K562 (cell line): ENCODE measurements at regions of chr11 and their contacts with region 1.

Region 1: GRCh38 chr11:8192016-8192895 is 23.4 kb upstream of the RIC3 start:
- DNase-seq: peak; percentile 68 to 77 (median 72)
- ATAC-seq: peak; percentile 98
- H3K4me3 ChIP-seq: no peak overlapping the region
- H3K27ac ChIP-seq: no peak overlapping the region
- H3K4me1 ChIP-seq: peaks cover 0 to 3% of the 10 kb centered on the region in 2 experiments; a peak in 1 of 5 replicates
- H3K27me3 ChIP-seq: peaks cover 0 to 6% of the 10 kb centered on the region in 2 experiments; a peak in 2 of 5 replicates
- CTCF ChIP-seq: peak; percentile 80 to 90 (median 86)
- EP300 ChIP-seq: no peak
- POLR2A ChIP-seq: no peak
- RAD21 ChIP-seq: peak; percentile 75 to 87

Region 2: GRCh38 chr11:8056810-8057463 is 135.3 kb before region 1 on chr11:
- CTCF ChIA-PET with region 1: no interaction called
- POLR2A ChIA-PET with region 1: no interaction called
- in situ Hi-C with region 1: no loop called
- intact Hi-C with region 1: no loop called
- DNase-seq: no peak
- ATAC-seq: no peak
- H3K4me3 ChIP-seq: no peak overlapping the region
- H3K27ac ChIP-seq: no peak overlapping the region
- H3K4me1 ChIP-seq: no peaks in the 10 kb centered on the region; a peak in 1 of 5 replicates
- H3K27me3 ChIP-seq: peaks cover under 1 to 32% of the 10 kb centered on the region in 2 experiments; a peak in 3 of 5 replicates
- CTCF ChIP-seq: no peak
- EP300 ChIP-seq: no peak
- POLR2A ChIP-seq: no peak
- RAD21 ChIP-seq: no peak

Region 3: DNA sequence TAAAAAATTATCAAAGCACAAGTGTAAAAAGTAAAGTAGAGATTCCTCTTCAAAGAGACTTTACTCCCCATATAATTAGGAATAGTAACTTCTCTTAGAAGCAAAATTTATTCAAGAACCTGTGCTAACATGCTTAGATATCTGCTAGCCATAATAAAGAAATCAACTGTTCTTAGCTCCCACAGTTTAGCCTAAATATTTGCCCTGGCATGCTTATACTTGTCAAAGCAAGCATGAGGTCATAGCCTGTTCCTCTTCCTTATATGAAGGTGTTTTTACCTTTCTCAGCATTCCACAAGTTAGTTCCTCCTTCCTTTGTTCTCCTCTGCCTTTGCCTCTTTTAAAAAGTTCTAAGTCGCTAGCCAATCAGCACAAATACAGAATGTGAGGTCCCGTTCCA is 53.7 kb before region 1 on chr11:
- CTCF ChIA-PET with region 1: no interaction called
- POLR2A ChIA-PET with region 1: no interaction called
- in situ Hi-C with region 1: no loop called
- intact Hi-C with region 1: no loop called
- DNase-seq: no peak
- ATAC-seq: no peak
- H3K4me3 ChIP-seq: no peak overlapping the region
- H3K27ac ChIP-seq: no peak overlapping the region
- H3K4me1 ChIP-seq: no peaks in the 10 kb centered on the region
- H3K27me3 ChIP-seq: no peaks in the 10 kb centered on the region
- CTCF ChIP-seq: no peak
- EP300 ChIP-seq: no peak
- POLR2A ChIP-seq: no peak
- RAD21 ChIP-seq: no peak

Region 4: DNA sequence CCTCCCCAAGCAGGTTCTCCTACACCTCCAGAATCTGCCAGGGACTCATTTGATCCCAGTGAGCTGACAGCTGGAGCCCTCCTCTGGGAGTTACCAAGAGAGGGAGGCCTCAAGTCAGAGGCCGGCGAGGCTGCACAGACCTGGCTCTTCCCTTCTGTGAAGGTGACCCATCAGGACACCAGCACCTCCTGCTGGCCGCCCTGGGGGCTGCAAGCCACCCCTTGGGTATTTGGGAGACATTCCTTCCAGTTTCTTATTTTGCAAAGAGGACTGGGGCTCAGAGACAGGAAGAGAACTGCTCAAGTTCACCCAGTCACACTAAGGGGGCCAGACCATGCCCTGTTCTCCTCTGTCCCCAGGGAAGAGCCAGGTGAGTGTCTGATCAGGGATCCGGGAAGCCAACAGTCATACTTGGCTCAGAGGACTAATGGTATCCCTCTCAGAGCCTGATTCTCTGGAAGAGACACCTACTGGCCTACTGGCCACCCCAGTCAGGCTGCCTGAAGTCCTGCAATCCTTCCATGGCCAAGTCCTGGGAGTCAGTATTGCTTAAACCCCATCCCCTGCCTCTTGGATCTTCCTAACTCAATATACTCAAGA is 17.1 kb after region 1 on chr11:
- CTCF ChIA-PET with region 1: interaction called, 6 read pairs
- POLR2A ChIA-PET with region 1: interaction called, 7 read pairs
- in situ Hi-C with region 1: no loop called
- intact Hi-C with region 1: loop called (anchors 1 kb)
- DNase-seq: peak; percentile 63 to 75 (median 71)
- ATAC-seq: peak; percentile 76
- H3K4me3 ChIP-seq: no peak overlapping the region
- H3K27ac ChIP-seq: no peak overlapping the region
- H3K4me1 ChIP-seq: peaks cover 11 to 22% of the 10 kb centered on the region in 2 experiments; a peak in 4 of 5 replicates
- H3K27me3 ChIP-seq: peaks cover 4 to 20% of the 10 kb centered on the region in 2 experiments; a peak in 4 of 5 replicates
- CTCF ChIP-seq: peak; percentile 71 to 90 (median 88)
- EP300 ChIP-seq: no peak
- POLR2A ChIP-seq: no peak
- RAD21 ChIP-seq: peak; percentile 62 to 69

Region 5: GRCh38 chr11:8263769-8264410 is 71.6 kb after region 1 on chr11 and contains the start of gene LMO1:
- CTCF ChIA-PET with region 1: interaction called, 3 read pairs
- POLR2A ChIA-PET with region 1: no interaction called
- in situ Hi-C with region 1: no loop called
- intact Hi-C with region 1: loop called (anchors 1 kb)
- DNase-seq: peak; percentile 72 to 86 (median 86)
- ATAC-seq: peak; percentile 95
- H3K4me3 ChIP-seq: no peak within 1 kb of the TSS
- H3K27ac ChIP-seq: no peak within 1 kb of the TSS
- H3K4me1 ChIP-seq: peaks cover 0 to 3% of the 10 kb centered on the region in 2 experiments; a peak in 1 of 5 replicates
- H3K27me3 ChIP-seq: peaks cover 22 to 68% of the 10 kb centered on the region in 2 experiments; a peak in 4 of 5 replicates
- CTCF ChIP-seq: peak; percentile 76 to 86 (median 84)
- EP300 ChIP-seq: no peak
- POLR2A ChIP-seq: no peak
- RAD21 ChIP-seq: peak in 1 of 2 experiments; percentile 57; a peak in 2 of 4 replicates
- polyA plus RNA-seq, gene LMO1: not detected

Region 6: DNA sequence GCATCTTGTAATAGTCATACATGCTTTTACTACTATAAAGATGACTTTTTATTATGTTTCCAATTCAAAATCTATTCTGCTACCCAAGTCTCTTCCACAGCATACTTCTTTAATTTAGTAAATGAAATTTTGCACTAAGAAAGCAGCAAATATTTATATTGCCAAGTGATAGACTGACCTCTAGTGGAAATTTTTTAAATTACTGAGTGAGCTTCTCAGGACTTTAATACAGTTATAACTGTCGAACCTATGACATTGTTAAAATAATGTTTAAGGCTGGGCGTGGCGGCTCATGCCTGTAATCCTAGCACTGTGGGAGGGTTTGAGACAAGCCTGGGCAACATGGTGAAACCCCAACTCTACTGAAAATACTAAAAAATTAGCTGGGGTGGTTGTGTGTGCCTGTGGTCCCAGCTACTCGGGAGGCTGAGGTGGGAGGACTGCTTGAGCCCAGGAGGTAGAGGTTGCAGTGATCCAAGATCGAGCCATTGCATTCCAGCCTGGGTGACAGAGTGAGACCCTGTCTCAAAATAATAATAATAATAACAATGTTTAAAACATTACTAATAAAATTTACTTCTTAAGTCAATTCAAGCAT is 374.5 kb after region 1 on chr11:
- CTCF ChIA-PET with region 1: interaction called, 9 read pairs
- POLR2A ChIA-PET with region 1: no interaction called
- in situ Hi-C with region 1: no loop called
- intact Hi-C with region 1: loop called (anchors 10 kb)
- DNase-seq: peak; percentile 6 to 41 (median 11)
- ATAC-seq: peak; percentile 84
- H3K4me3 ChIP-seq: no peak overlapping the region
- H3K27ac ChIP-seq: no peak overlapping the region
- H3K4me1 ChIP-seq: no peaks in the 10 kb centered on the region
- H3K27me3 ChIP-seq: no peaks in the 10 kb centered on the region; a peak in 1 of 5 replicates
- CTCF ChIP-seq: peak; percentile 28 to 82 (median 47); a peak in 4 of 6 replicates
- EP300 ChIP-seq: no peak
- POLR2A ChIP-seq: no peak
- RAD21 ChIP-seq: peak; percentile 75 to 84